Right ventricle myocardium inferior (tissue), 1 donor: ENCODE measurements at regions of chr5 and their contacts with region 1.

Region 1: DNA sequence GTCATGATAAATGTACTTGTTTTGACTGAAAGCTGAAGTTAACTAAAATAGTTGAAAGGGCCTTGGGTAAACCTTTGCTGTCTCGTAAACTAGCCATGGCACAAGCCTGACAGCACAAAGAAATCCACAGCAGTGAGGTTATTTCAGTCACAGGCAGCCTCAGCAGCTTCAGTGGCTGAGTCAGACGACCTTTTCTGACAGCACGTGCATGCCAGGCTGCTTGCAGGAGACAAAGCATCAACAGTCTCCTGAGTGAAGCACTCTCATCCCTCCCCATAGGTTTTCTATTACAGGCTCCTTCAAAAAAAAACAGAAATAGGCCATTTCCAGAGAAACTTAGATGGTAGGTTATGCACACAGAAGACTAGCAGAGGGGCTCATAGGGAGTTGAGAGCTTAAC is 34.6 kb downstream of the OXCT1 start:
- DNase-seq: peak; percentile 65
- ATAC-seq: peak; percentile 91

Region 2: DNA sequence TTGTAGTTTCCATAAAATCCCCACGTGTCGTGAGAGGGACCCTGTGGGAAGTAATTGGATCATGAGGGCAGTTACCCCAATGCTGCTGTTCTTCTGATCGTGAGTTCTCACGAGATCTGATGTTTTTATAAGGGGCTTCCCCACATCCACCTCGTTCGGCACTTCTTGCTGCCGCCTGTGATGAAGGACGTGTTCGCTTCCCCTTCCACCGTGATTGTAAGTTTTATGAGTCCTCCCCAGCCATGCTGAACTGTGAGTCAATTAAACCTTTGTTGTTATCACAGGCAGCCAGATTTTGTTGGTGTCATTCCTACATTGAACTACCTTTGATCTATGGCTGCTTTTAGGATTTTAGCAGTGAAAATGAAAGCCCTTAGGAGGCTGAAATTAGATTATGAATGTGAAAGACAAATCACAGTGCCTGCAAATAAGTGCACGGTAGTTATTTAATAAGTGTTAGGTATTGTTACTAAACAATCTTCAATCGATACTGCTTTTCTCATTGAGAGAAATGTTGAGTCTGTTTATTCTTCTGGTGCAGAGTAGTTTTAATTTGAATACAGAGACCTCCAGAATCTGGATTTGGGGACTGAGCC is 554.3 kb before region 1 on chr5:
- intact Hi-C with region 1: loop called (anchors 10 kb)
- DNase-seq: no peak
- ATAC-seq: no peak

Region 3: GRCh38 chr5:41925555-41925951 is 89.9 kb after region 1 on chr5:
- intact Hi-C with region 1: no loop called
- DNase-seq: peak; percentile 75
- ATAC-seq: peak; percentile 38